T-cell (primary cell): ENCODE measurements at regions of chr1 and their contacts with region 1.

Region 1: GRCh38 chr1:78004719-78005447 is at the start of gene DNAJB4:
- DNase-seq: peak in 33 of 35 experiments; percentile 29 to 92 (median 65)
- ATAC-seq: peak; percentile 97 to 100 (median 100)
- H3K4me3 ChIP-seq: peak within 1 kb of the TSS; percentile 55 to 60
- H3K4me3 Mint-ChIP-seq: peak within 1 kb of the TSS; percentile 87 to 88 (median 87)
- H3K27ac ChIP-seq: peak within 1 kb of the TSS; percentile 97
- H3K27ac Mint-ChIP-seq: peak within 1 kb of the TSS; percentile 97 to 99
- H3K4me1 ChIP-seq: peaks cover 4 to 13% of the 10 kb centered on the region in 2 experiments
- H3K4me1 Mint-ChIP-seq: peaks cover 45 to 49% (median 48%) of the 10 kb centered on the region in 3 donors
- H3K27me3 ChIP-seq: no peaks in the 10 kb centered on the region
- H3K27me3 Mint-ChIP-seq: no peaks in the 10 kb centered on the region
- total RNA-seq, gene DNAJB4: 10.0 to 19.6 (median 12.2) TPM

Region 2: GRCh38 chr1:77683160-77684148 is 321.4 kb before region 1 on chr1:
- CTCF ChIA-PET with region 1: interaction called in 1 of 2 experiments, 3 read pairs
- POLR2A ChIA-PET with region 1: interaction called in 1 of 2 experiments, 13 read pairs
- DNase-seq: peak; percentile 79 to 95 (median 90)
- ATAC-seq: peak; percentile 75 to 82 (median 78)
- H3K4me3 ChIP-seq: peak overlapping the region; percentile 52 to 74
- H3K4me3 Mint-ChIP-seq: peak overlapping the region; percentile 82 to 91 (median 89)
- H3K27ac ChIP-seq: peak overlapping the region; percentile 78
- H3K27ac Mint-ChIP-seq: peak overlapping the region; percentile 94 to 97
- H3K4me1 ChIP-seq: peaks cover 17 to 24% of the 10 kb centered on the region in 2 experiments
- H3K4me1 Mint-ChIP-seq: peaks cover 41 to 53% (median 48%) of the 10 kb centered on the region in 3 donors
- H3K27me3 ChIP-seq: no peaks in the 10 kb centered on the region
- H3K27me3 Mint-ChIP-seq: no peaks in the 10 kb centered on the region

Region 3: DNA sequence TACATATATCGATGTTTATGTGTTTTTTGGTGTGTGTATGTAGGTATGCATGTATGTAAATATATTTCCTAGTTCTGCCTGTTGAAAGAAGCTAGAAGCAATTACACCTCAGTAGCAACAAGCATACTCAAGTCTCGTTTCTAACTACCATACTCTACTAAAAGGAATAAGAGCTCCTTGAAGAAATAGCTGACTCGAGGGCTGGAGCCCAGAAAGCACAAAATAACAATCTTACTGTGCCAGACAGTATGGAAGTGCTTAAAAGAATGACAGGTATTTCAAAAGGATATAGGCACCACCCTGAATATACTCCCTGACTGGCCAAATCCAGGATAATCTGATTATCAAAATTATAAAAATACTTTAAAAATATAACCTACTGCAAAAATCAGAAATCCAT is 49.2 kb before region 1 on chr1:
- CTCF ChIA-PET with region 1: interaction called in 1 of 2 experiments, 4 read pairs
- POLR2A ChIA-PET with region 1: interaction called in 1 of 2 experiments, 10 read pairs
- DNase-seq: no peak
- ATAC-seq: no peak
- H3K4me3 ChIP-seq: no peak overlapping the region
- H3K4me3 Mint-ChIP-seq: no peak overlapping the region
- H3K27ac ChIP-seq: no peak overlapping the region
- H3K27ac Mint-ChIP-seq: no peak overlapping the region
- H3K4me1 ChIP-seq: no peaks in the 10 kb centered on the region
- H3K4me1 Mint-ChIP-seq: peaks cover 23 to 28% (median 25%) of the 10 kb centered on the region in 3 donors
- H3K27me3 ChIP-seq: no peaks in the 10 kb centered on the region
- H3K27me3 Mint-ChIP-seq: no peaks in the 10 kb centered on the region

Region 4: DNA sequence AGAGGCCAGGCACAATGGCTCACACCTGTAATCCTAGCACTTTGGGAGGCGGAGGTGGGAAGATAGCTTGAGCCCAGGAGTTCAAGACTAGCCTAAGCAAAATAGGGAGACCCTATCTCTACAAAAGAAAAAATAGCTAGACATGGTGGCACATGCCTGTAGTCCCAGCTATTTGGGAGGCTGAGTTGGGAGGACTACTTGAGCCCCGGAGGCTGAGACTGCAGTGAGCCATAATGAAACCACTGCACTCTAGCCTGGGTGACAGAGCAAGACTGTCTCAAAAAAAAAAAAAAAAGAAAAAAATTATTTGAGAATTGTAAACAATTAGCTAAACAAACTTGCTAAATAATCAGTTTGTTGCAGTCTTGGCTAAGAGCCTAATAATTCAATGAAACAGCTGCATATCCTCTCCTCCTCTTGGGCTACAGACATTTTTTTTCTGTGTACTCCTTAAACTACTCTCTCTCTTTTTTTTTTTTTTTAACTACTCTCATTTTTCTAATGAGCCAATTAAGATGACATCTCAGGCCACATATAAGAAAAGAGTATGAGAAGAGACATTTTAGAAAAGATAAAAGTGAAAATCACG is 10.7 kb before region 1 on chr1:
- CTCF ChIA-PET with region 1: interaction called in 1 of 2 experiments, 3 read pairs
- POLR2A ChIA-PET with region 1: interaction called, 13 read pairs
- DNase-seq: no peak
- ATAC-seq: no peak
- H3K4me3 ChIP-seq: no peak overlapping the region
- H3K4me3 Mint-ChIP-seq: no peak overlapping the region
- H3K27ac ChIP-seq: no peak overlapping the region
- H3K27ac Mint-ChIP-seq: no peak overlapping the region
- H3K4me1 ChIP-seq: no peaks in the 10 kb centered on the region
- H3K4me1 Mint-ChIP-seq: peaks cover 11 to 12% (median 12%) of the 10 kb centered on the region in 3 donors
- H3K27me3 ChIP-seq: no peaks in the 10 kb centered on the region
- H3K27me3 Mint-ChIP-seq: no peaks in the 10 kb centered on the region

Region 5: GRCh38 chr1:78114034-78114956 is 109.4 kb after region 1 on chr1:
- CTCF ChIA-PET with region 1: interaction called, 5 to 18 read pairs
- POLR2A ChIA-PET with region 1: interaction called in 1 of 2 experiments, 5 read pairs
- DNase-seq: peak; percentile 3 to 77 (median 41)
- ATAC-seq: peak; percentile 79 to 90 (median 84)
- H3K4me3 ChIP-seq: no peak overlapping the region
- H3K4me3 Mint-ChIP-seq: no peak overlapping the region
- H3K27ac ChIP-seq: no peak overlapping the region
- H3K27ac Mint-ChIP-seq: no peak overlapping the region
- H3K4me1 ChIP-seq: no peaks in the 10 kb centered on the region
- H3K4me1 Mint-ChIP-seq: no peaks in the 10 kb centered on the region
- H3K27me3 ChIP-seq: no peaks in the 10 kb centered on the region
- H3K27me3 Mint-ChIP-seq: peaks cover 0 to 3% of the 10 kb centered on the region in 2 donors

Region 6: DNA sequence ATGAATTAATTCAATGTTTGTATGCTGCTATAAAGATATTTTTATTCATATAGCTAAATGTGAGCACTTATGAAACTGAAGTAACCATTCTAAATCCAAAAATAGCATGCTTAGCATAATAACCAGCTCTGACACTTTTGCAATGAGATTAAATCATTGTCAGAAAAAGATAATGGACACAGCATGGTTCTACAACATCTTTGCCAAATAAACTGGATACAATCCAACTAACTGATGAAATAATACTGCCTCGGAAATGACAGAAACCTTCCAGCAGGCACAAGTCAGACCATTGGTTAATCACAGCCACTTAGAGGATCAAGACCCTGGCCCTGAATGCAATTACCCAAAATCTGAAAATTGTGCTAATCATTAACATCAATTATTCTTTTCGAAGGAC is 1594.4 kb after region 1 on chr1:
- CTCF ChIA-PET with region 1: no interaction called
- POLR2A ChIA-PET with region 1: no interaction called
- DNase-seq: no peak
- ATAC-seq: no peak
- H3K4me3 ChIP-seq: no peak overlapping the region
- H3K4me3 Mint-ChIP-seq: no peak overlapping the region
- H3K27ac ChIP-seq: no peak overlapping the region
- H3K27ac Mint-ChIP-seq: no peak overlapping the region
- H3K4me1 ChIP-seq: no peaks in the 10 kb centered on the region
- H3K4me1 Mint-ChIP-seq: no peaks in the 10 kb centered on the region
- H3K27me3 ChIP-seq: no peaks in the 10 kb centered on the region
- H3K27me3 Mint-ChIP-seq: no peaks in the 10 kb centered on the region